PC-9 (cell line): ENCODE measurements at regions of chr19 and their contacts with region 1.

Region 1: DNA sequence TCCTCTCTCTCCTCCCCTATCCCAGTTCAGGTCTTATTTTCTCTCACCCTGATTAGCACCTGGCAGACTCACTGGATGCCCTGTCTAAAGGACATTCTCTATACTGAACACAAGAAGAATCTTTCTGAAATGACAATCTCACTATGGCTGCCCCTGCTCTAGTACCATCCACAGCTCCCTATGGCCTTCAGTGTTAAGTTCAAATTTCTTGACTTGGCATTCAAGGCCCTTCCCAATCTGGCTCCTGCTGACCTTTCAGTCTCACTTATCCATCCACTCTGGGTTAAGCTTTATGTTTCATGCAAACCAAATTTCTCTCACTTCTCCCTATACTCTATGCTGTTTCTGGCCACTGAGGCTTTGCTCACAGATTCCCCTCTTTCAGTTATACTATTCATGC is 34.2 kb downstream of the MBD3L1 start:
- DNase-seq: no peak
- H3K4me3 ChIP-seq: no peak overlapping the region
- H3K27ac ChIP-seq: no peak overlapping the region
- H3K4me1 ChIP-seq: no peaks in the 10 kb centered on the region
- H3K27me3 ChIP-seq: no peaks in the 10 kb centered on the region
- CTCF ChIP-seq: no peak

Region 2: DNA sequence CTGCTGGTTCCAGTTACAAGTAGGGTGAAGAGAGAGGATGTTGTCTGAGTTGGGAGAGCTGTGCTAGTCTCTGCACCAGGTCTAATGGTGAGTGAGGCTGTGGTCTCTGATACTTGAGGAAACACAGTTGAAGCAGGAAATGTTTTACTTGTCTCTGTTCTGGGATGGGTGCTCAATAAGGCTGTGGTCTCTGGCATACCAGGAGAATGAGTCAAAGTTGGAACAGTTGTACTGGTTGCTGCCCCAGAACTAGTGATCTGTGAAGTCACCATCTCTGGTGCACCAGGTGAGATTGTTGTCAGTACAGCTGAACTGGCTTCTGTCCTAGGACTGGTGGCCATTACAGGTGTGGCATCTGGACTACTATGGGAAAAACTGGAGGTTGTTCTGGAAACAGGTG is 69.1 kb after region 1 on chr19:
- CTCF ChIA-PET with region 1: no interaction called
- POLR2A ChIA-PET with region 1: interaction called, 10 read pairs
- intact Hi-C with region 1: no loop called
- DNase-seq: peak; percentile 63 to 88
- H3K4me3 ChIP-seq: no peak overlapping the region
- H3K27ac ChIP-seq: no peak overlapping the region
- H3K4me1 ChIP-seq: peaks cover 13% of the 10 kb centered on the region
- H3K27me3 ChIP-seq: no peaks in the 10 kb centered on the region
- CTCF ChIP-seq: no peak